ENCODE measurements at regions of chr10 and their contacts with region 1.

Region 1: GRCh38 chr10:93509816-93510215 is 13.4 kb downstream of the CEP55 start:
- DNase-seq: no peak
- H3K4me3 ChIP-seq: no peak overlapping the region
- H3K27ac ChIP-seq: no peak overlapping the region
- H3K4me1 ChIP-seq: peaks cover 4% of the 10 kb centered on the region
- H3K27me3 ChIP-seq: no peaks in the 10 kb centered on the region
- CTCF ChIP-seq: no peak
- POLR2A ChIP-seq: no peak

Region 2: DNA sequence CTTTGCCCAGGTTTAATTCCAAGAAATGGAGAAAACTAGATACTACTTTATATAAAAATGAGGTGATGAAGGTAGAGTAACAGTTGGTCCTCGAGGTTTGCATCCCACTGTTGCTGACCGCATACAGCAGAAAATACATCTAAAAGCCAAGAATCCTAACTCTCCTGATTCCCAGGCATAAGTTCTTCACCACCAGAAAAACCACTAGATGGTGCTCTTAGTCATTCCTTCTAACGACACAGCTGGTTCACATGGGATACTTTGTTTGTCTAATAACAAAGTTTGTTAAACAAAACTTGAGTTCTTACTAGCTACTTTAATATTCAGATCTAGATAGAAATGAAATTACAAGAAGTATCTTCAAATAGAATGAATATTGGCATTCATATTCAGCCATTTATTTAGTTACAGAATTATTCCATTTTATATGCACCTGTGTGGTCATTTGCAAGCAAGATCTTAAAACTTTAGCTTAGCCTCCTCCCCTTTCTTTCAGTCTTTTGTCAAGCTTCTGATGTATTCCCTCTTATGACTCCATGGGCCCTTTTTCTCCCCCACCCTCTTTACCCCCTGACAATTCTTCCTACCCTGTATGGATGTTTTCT is 503.3 kb before region 1 on chr10:
- CTCF ChIA-PET with region 1: interaction called, 12 read pairs
- POLR2A ChIA-PET with region 1: no interaction called
- dilution Hi-C with region 1: no loop called
- intact Hi-C with region 1: no loop called
- DNase-seq: peak; percentile 61
- H3K4me3 ChIP-seq: no peak overlapping the region
- H3K27ac ChIP-seq: no peak overlapping the region
- H3K4me1 ChIP-seq: no peaks in the 10 kb centered on the region
- H3K27me3 ChIP-seq: no peaks in the 10 kb centered on the region
- CTCF ChIP-seq: peak; percentile 45 to 48
- POLR2A ChIP-seq: no peak

Region 3: DNA sequence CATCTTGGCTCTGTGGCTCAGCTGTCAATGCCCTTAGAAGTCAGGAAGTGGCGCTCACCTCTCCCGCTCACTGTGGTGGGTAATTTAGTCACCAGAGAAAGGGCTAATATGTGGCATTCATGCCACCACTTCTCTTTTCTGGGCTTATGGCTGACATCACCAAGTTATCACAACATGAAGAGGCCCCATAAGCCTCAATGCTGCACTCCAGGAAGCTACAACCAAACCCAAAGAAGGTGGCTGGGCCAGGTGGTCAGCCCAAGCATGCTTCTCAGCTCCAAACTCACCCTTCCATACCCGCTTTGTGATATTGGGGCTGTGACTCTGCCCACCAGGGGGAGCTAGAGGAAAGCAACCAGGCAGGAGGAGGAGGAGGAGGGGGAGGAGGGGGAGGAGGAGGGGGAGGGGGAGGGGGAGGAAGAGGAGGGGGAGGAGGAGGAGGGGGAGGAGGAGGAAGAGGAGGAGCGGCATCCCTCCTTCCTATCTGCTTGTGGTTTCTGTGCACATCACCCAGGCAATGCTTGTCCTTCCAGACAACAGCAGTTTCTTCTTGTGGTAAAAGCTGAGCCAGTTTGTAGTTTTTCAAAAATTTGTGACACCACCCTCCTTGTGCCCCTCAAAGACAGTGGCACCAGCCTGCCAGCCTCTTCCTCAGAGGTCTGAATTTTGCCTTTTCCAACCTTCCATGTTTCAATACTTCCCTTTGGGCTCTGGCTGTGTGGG is 394.0 kb before region 1 on chr10:
- CTCF ChIA-PET with region 1: interaction called, 23 read pairs
- POLR2A ChIA-PET with region 1: no interaction called
- dilution Hi-C with region 1: no loop called
- intact Hi-C with region 1: loop called (anchors 2 kb)
- DNase-seq: peak; percentile 38
- H3K4me3 ChIP-seq: no peak overlapping the region
- H3K27ac ChIP-seq: no peak overlapping the region
- H3K4me1 ChIP-seq: no peaks in the 10 kb centered on the region
- H3K27me3 ChIP-seq: peaks cover 8 to 13% of the 10 kb centered on the region in 2 experiments
- CTCF ChIP-seq: peak; percentile 21 to 60
- POLR2A ChIP-seq: no peak

Region 4: DNA sequence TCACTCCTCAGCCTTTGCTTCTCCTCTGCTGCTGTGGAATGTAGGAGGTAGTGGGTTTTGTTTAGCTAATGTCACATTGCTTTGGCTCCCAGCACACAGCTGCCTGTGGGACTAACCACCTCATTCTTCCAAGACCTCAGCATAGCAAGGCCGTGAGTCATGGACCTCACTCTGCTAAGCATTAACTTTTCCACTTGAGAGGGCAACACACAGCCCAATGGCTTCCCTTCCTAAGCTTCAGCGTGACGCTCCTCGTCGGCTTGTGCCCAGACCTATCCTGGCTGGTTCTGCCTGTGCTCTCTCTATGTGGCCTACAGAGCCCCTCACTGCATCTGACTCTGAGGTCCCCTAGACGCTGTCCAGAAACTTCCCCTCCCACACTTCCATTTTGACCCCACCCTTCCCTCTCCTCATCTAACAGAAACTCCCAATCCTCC is 51.0 kb before region 1 on chr10:
- CTCF ChIA-PET with region 1: no interaction called
- POLR2A ChIA-PET with region 1: no interaction called
- dilution Hi-C with region 1: no loop called
- intact Hi-C with region 1: no loop called
- DNase-seq: peak; percentile 98
- H3K4me3 ChIP-seq: no peak overlapping the region
- H3K27ac ChIP-seq: peak overlapping the region; percentile 85
- H3K4me1 ChIP-seq: peaks cover 57% of the 10 kb centered on the region
- H3K27me3 ChIP-seq: no peaks in the 10 kb centered on the region
- CTCF ChIP-seq: no peak
- POLR2A ChIP-seq: peak; percentile 48

Region 5: GRCh38 chr10:93799155-93799708 is 289.4 kb after region 1 on chr10:
- CTCF ChIA-PET with region 1: no interaction called
- POLR2A ChIA-PET with region 1: no interaction called
- dilution Hi-C with region 1: no loop called
- intact Hi-C with region 1: no loop called
- DNase-seq: no peak
- H3K4me3 ChIP-seq: no peak overlapping the region
- H3K27ac ChIP-seq: no peak overlapping the region
- H3K4me1 ChIP-seq: no peaks in the 10 kb centered on the region
- H3K27me3 ChIP-seq: peaks cover 5 to 6% of the 10 kb centered on the region in 2 experiments
- CTCF ChIP-seq: no peak
- POLR2A ChIP-seq: no peak